ENCODE measurements at regions of chr12 and their contacts with region 1.

Region 1: DNA sequence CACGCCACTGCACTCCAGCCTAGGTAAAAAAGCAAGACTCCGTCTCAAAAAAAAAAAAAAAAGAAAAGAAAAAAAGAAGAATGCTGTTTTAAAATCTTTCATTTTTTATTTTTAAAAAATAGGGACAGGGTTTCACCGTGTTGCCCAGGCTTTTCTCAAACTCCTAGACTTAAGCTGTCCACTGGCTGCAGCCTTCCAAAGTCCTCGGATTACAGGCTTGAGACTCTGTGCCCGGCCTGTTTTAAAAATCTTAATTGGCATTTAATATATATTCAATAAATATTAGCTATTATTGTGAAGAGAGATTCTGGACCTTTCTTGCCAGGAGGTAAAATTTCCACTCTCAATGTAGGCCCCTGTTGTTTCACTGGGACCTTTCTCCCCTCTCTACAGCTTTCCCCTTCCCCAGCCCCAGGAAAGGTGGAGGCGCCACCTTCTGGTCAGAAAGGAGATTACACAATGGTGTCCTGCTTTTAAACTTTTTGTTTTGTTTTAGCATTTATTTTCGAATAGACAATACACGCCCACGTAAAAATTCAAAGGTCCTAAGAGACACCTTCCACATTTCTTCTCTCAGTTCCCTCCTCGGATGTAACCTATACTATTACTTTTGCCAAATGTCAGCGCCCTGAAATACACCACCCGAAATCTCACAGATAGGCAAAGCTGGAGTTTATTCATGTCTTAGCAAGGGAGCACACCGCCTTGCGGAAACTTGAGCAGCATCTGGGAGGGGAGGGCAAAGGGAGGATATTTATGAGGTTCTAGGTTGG is 23.8 kb upstream of the PHC1 start:
- DNase-seq: peak; percentile 76
- H3K4me3 ChIP-seq: peak overlapping the region; percentile 50 to 67
- H3K27ac ChIP-seq: no peak overlapping the region
- H3K4me1 ChIP-seq: no peaks in the 10 kb centered on the region
- H3K27me3 ChIP-seq: no peaks in the 10 kb centered on the region
- CTCF ChIP-seq: peak; percentile 93
- EP300 ChIP-seq: no peak
- RAD21 ChIP-seq: peak; percentile 80

Region 2: DNA sequence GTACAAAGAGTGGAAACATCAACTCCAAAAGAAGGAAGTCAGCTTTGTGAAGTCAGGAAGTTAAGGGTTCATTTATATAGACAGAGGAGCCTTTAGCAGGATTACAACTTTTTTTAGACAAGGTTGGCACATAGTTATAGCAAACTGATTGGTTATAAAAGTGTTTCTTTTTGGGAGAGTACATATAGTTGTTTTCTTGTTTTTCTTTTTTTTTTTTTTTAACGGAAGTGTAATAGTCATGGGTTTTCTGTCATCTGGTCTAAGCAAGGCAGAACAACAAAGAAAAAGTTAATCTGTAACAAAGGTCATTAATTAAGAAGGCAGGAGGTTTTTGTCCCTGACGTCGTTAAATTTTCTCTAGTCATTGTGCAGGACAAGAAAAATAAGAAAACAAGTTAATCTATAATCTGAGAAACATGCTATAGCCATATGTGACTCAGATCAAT is 214.9 kb before region 1 on chr12:
- CTCF ChIA-PET with region 1: interaction called, 48 read pairs
- POLR2A ChIA-PET with region 1: interaction called, 4 read pairs
- DNase-seq: no peak
- H3K4me3 ChIP-seq: no peak overlapping the region
- H3K27ac ChIP-seq: no peak overlapping the region
- H3K4me1 ChIP-seq: no peaks in the 10 kb centered on the region; a peak in 1 of 4 replicates
- H3K27me3 ChIP-seq: no peaks in the 10 kb centered on the region; the same call in 1 of the 2 replicates
- CTCF ChIP-seq: no peak
- EP300 ChIP-seq: no peak
- RAD21 ChIP-seq: no peak

Region 3: GRCh38 chr12:8780389-8780788 is 110.1 kb before region 1 on chr12:
- CTCF ChIA-PET with region 1: interaction called, 11 read pairs
- POLR2A ChIA-PET with region 1: no interaction called
- DNase-seq: peak; percentile 24
- H3K4me3 ChIP-seq: no peak overlapping the region
- H3K27ac ChIP-seq: no peak overlapping the region; a peak in 1 of 4 replicates
- H3K4me1 ChIP-seq: peaks cover 0 to 15% of the 10 kb centered on the region in 2 experiments; a peak in 2 of 4 replicates
- H3K27me3 ChIP-seq: no peaks in the 10 kb centered on the region
- CTCF ChIP-seq: peak; percentile 48
- EP300 ChIP-seq: no peak
- RAD21 ChIP-seq: peak; percentile 59

Region 4: GRCh38 chr12:8852119-8852518 is 38.4 kb before region 1 on chr12:
- CTCF ChIA-PET with region 1: interaction called, 14 read pairs
- POLR2A ChIA-PET with region 1: no interaction called
- DNase-seq: no peak
- H3K4me3 ChIP-seq: no peak overlapping the region
- H3K27ac ChIP-seq: no peak overlapping the region
- H3K4me1 ChIP-seq: no peaks in the 10 kb centered on the region
- H3K27me3 ChIP-seq: peaks cover 5% of the 10 kb centered on the region; the same call in 1 of the 2 replicates
- CTCF ChIP-seq: no peak
- EP300 ChIP-seq: no peak
- RAD21 ChIP-seq: no peak

Region 5: DNA sequence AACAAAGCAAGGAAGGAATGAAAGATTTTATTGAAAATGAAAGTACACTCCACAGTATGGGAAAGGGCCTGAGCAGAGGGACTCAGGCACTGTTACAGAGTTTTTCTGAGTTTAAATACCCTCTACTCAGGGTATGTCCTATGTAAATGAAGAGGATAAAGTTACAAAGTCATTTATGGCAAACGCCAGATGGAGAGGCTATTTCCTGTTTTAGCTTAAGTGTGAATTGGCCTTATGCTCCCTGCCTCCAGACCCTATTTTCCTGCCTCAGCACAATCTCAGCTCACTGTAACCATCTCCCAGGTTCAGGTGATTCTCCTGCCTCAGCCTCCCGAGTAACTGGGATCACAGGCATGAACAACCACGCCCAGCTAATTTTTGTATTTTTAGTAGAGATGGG is 17.0 kb after region 1 on chr12:
- CTCF ChIA-PET with region 1: interaction called, 26 read pairs
- POLR2A ChIA-PET with region 1: no interaction called
- DNase-seq: no peak
- H3K4me3 ChIP-seq: no peak overlapping the region
- H3K27ac ChIP-seq: no peak overlapping the region
- H3K4me1 ChIP-seq: no peaks in the 10 kb centered on the region
- H3K27me3 ChIP-seq: no peaks in the 10 kb centered on the region; the same call in 1 of the 2 replicates
- CTCF ChIP-seq: no peak
- EP300 ChIP-seq: no peak
- RAD21 ChIP-seq: no peak

Region 6: DNA sequence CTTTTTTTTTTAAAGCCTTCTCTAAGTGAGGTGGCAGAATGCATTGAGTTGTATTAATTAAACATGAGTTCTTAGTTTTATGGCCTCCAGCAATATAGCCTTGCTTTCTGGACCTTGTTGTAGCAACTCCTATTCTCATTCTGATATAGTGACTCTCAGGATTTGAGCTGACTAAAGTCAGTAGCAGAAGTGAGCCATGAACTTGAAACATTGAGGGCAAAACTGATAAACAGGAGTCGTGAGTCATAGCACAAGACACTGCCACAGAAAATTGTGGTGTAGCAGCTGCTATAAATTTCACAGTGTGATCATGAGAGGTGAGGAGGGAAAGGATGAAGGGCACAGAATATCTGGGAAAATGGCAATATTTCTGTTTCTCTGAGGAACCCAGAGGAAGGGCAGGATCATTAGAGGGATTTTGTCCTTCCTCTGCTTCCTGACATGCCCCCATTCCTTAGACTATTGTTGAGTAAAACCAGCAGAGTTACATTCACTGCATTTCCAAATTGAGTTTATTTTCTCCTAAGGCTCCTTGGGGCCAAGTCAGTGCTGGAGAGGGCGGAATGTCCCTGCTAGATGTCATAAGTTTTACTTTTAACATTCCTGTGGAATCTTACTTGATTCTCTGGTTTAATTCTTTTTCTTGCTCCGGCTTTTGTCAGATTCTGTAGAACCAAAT is 106.3 kb after region 1 on chr12:
- CTCF ChIA-PET with region 1: no interaction called
- POLR2A ChIA-PET with region 1: no interaction called
- DNase-seq: no peak
- H3K4me3 ChIP-seq: no peak overlapping the region
- H3K27ac ChIP-seq: no peak overlapping the region
- H3K4me1 ChIP-seq: no peaks in the 10 kb centered on the region
- H3K27me3 ChIP-seq: no peaks in the 10 kb centered on the region
- CTCF ChIP-seq: no peak
- EP300 ChIP-seq: no peak
- RAD21 ChIP-seq: no peak

Region 7: DNA sequence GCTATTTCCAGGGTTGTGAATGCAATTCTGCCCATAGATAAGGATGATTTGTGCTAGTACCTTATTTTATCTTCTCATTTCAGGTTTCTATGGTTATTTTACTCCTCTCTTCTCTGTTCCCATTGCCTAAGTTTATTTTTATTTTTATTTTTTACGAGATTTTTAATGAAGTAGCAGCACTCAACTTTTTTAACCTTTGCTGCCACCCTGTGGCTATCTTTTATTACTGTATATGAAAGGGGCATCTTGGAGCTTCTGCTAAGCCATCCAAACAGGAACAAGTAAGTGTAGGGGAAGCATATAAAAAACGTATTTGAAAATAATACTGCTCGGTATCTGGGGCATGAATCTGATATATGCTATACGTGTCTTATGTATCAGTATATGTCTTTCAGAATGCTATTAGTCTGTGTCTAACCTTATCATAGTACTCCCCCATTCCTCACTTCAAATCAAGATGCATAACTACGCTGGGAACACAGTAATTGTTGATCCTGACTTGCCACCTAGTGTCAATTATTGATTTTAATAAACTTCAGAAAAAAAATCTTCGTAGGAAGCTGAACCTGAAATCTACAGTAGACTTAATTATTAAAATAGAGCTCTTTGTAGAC is 159.1 kb after region 1 on chr12:
- CTCF ChIA-PET with region 1: interaction called, 13 read pairs
- POLR2A ChIA-PET with region 1: no interaction called
- DNase-seq: peak; percentile 44
- H3K4me3 ChIP-seq: no peak overlapping the region
- H3K27ac ChIP-seq: no peak overlapping the region
- H3K4me1 ChIP-seq: peaks cover 0 to 3% of the 10 kb centered on the region in 2 experiments; a peak in 2 of 4 replicates
- H3K27me3 ChIP-seq: no peaks in the 10 kb centered on the region
- CTCF ChIP-seq: peak; percentile 73
- EP300 ChIP-seq: no peak
- RAD21 ChIP-seq: peak; percentile 61

Region 8: GRCh38 chr12:9184276-9184675 is 293.8 kb after region 1 on chr12:
- CTCF ChIA-PET with region 1: no interaction called
- POLR2A ChIA-PET with region 1: no interaction called
- DNase-seq: no peak
- H3K4me3 ChIP-seq: no peak overlapping the region
- H3K27ac ChIP-seq: no peak overlapping the region
- H3K4me1 ChIP-seq: no peaks in the 10 kb centered on the region
- H3K27me3 ChIP-seq: no peaks in the 10 kb centered on the region
- CTCF ChIP-seq: no peak
- EP300 ChIP-seq: no peak
- RAD21 ChIP-seq: no peak